Gastrocnemius medialis (tissue), 4 donors: ENCODE measurements at regions of chr19 and their contacts with region 1.

Region 1: GRCh38 chr19:16608290-16608739 is 19.7 kb downstream of the MED26 start:
- DNase-seq: peak; percentile 77 to 78
- ATAC-seq: peak; percentile 86 to 88
- H3K4me3 ChIP-seq: no peak overlapping the region
- H3K27ac ChIP-seq: peak overlapping the region; percentile 79 to 86 (median 84)
- H3K4me1 ChIP-seq: peaks cover 67 to 86% of the 10 kb centered on the region in 2 donors
- H3K27me3 ChIP-seq: no peaks in the 10 kb centered on the region
- CTCF ChIP-seq: no peak
- POLR2A ChIP-seq: no peak

Region 2: DNA sequence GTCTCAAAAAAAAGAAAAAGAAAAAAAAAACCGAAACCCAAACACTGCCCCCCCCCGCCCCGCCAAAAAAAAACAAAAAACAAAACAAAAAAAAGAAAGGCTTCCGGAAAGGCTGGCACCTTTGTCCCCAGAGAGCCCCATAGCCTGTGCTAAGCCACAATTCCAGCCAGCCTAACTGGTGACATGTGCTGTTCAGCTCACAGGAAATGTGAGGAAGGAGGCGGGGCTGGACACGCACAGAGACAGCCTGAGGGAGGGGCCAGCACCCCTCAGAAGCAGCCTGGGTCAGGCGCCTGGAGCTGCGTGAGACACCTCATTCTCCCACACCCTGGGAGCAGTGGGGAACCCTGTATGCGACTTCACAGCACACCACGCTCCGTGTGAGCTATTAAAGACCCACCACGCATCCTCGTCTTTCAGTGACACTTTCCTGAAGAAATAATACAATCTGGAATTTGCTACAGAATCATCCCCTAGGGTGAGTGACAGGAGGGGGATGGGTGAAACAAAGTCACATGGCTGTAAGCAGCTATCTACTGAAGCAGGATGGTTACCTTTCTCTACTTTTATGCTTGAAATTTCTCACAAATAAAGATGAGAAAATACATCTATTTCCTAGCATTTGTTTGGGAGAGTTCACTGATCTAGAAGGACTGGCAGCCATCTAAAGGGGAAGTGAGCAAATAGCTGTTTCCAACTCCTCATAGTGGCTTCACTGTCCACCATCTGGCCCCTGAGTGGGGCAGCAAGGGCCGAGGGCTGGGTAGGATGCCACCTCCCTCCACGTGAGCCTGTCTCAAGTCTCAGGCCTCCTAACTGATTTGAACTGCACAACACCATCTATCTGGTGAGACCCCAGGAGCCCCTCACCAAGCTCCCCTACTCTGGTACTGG is 23.8 kb before region 1 on chr19:
- in situ Hi-C with region 1: no loop called
- intact Hi-C with region 1: loop called (anchors 1 kb)
- DNase-seq: peak; percentile 90 to 91
- ATAC-seq: peak; percentile 59 to 60
- H3K4me3 ChIP-seq: peak overlapping the region; percentile 18 to 47 (median 26)
- H3K27ac ChIP-seq: peak overlapping the region; percentile 94 to 97 (median 95)
- H3K4me1 ChIP-seq: peaks cover 96 to 99% of the 10 kb centered on the region in 2 donors
- H3K27me3 ChIP-seq: no peaks in the 10 kb centered on the region
- CTCF ChIP-seq: no peak
- POLR2A ChIP-seq: peak; percentile 85 to 88

Region 3: GRCh38 chr19:16671652-16672274 is 63.4 kb after region 1 on chr19:
- in situ Hi-C with region 1: no loop called
- intact Hi-C with region 1: loop called (anchors 1 kb)
- DNase-seq: peak; percentile 91 to 97
- ATAC-seq: peak; percentile 87
- H3K4me3 ChIP-seq: no peak overlapping the region
- H3K27ac ChIP-seq: peak overlapping the region; percentile 100
- H3K4me1 ChIP-seq: peaks cover 44 to 52% of the 10 kb centered on the region in 2 donors
- H3K27me3 ChIP-seq: no peaks in the 10 kb centered on the region
- CTCF ChIP-seq: peak in 1 of 5 experiments; percentile 19
- POLR2A ChIP-seq: peak; percentile 58 to 75

Region 4: DNA sequence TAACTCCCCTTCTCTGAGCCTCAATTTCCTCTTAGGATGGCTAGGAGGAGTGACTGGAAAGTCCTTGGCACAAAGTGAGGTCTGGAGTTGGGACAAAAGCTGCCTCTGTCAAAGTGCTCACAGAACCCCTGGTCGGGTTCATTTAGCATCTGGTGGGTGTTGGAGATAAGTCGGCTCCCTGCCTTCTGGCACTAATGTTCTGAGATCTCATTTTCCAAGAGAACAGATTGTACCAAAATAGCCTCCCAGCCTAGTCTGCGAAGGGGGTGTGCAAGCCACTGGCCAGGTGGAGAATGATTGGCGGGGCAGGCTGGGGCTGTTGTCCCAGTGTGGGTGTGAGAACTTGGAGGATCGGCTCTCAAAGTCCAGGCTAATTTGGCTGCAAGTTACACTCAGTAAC is 90.6 kb after region 1 on chr19:
- in situ Hi-C with region 1: no loop called
- intact Hi-C with region 1: loop called (anchors 2 kb)
- DNase-seq: peak; percentile 87 to 90
- ATAC-seq: peak; percentile 91 to 94
- H3K4me3 ChIP-seq: no peak overlapping the region
- H3K27ac ChIP-seq: peak overlapping the region; percentile 72 to 86 (median 79)
- H3K4me1 ChIP-seq: peaks cover 27 to 32% of the 10 kb centered on the region in 2 donors
- H3K27me3 ChIP-seq: no peaks in the 10 kb centered on the region
- CTCF ChIP-seq: no peak
- POLR2A ChIP-seq: peak in 1 of 2 donors; percentile 17

Region 5: DNA sequence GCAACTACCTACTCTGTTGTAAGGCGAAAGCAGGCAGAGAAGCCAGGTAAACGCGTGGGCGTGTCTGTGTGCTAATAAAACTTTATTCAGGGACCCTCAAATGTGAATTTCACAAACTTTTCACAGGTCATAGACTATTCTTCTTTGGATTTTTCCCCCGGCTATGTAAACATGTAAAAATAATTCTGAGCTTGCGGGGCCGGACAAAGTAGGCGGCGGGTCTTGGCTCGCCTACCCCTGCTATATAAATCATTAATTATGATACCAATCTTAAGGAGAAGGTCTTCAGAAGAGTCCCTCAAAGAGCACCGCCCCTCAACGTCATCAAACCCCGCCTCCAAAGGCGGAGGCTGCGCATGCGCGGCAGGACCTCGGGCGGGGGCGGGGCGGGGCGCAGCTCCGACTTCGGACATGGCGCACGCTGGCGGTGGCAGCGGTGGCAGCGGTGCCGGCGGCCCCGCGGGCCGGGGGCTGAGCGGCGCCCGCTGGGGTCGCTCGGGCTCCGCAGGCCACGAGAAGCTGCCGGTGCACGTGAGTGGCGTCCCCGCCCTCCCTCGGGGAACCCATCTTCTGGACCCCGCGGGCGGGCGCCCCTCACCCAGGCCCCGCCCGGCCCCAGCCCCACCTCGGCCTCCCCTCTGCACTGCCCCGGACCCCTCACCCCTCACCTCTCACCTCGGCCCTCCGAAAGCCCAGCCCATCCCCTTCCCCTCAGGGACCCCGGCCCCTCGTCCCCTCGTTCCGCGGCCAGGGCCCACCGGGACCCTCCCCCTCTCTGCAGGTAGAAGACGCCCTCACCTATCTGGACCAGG is 220.9 kb after region 1 on chr19 and contains the start of gene SIN3B:
- in situ Hi-C with region 1: no loop called
- intact Hi-C with region 1: loop called (anchors 10 kb)
- DNase-seq: peak; percentile 69 to 78
- ATAC-seq: peak; percentile 94 to 95
- H3K4me3 ChIP-seq: peak within 1 kb of the TSS; percentile 64 to 96 (median 80)
- H3K27ac ChIP-seq: peak within 1 kb of the TSS; percentile 84 to 90 (median 86)
- H3K4me1 ChIP-seq: peaks cover 18 to 25% of the 10 kb centered on the region in 2 donors
- H3K27me3 ChIP-seq: no peaks in the 10 kb centered on the region
- CTCF ChIP-seq: peak in 1 of 5 experiments; percentile 9
- POLR2A ChIP-seq: peak; percentile 59 to 72
- total RNA-seq, gene SIN3B: 11.6 to 15.2 (median 14.3) TPM

Region 6: DNA sequence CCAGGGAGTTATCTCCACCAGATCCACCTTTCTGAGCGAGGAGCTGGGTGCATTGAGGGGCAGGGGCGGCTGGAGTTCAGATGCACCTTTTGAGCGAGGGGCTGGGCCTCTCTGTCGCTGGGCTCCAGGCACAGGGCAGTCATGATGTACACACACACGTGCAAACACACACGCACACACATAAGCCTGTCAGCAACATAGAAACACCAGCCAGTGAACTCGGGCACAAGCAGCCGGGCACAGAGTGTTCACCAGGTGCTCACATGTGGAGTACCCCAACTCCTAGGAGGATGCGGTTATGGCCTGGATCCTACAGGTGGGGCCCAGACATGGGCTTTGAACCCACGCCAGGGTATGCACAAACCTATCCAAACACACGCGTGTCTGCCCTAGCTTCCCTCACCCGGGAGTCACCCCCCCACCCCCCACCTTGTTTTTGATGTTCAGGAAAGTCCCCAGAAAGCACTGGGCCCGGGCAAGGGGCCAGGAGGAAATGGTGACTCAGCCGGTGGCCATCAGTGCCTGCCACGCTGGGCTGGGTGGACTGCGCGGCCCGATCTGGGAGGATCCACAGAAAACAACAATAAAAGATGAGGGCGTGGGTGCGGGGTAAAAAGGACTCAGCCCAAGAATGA is 1412.9 kb after region 1 on chr19:
- in situ Hi-C with region 1: no loop called
- intact Hi-C with region 1: no loop called
- DNase-seq: peak; percentile 92
- ATAC-seq: peak; percentile 10 to 13
- H3K4me3 ChIP-seq: peak overlapping the region in 3 of 4 donors; percentile 18 to 54 (median 30)
- H3K27ac ChIP-seq: peak overlapping the region; percentile 89 to 100 (median 95)
- H3K4me1 ChIP-seq: peaks cover 68 to 75% of the 10 kb centered on the region in 2 donors
- H3K27me3 ChIP-seq: no peaks in the 10 kb centered on the region
- CTCF ChIP-seq: peak in 1 of 5 experiments; percentile 34
- POLR2A ChIP-seq: peak in 1 of 2 donors; percentile 60